ENCODE measurements at regions of chr4 and their contacts with region 1.

Region 1: DNA sequence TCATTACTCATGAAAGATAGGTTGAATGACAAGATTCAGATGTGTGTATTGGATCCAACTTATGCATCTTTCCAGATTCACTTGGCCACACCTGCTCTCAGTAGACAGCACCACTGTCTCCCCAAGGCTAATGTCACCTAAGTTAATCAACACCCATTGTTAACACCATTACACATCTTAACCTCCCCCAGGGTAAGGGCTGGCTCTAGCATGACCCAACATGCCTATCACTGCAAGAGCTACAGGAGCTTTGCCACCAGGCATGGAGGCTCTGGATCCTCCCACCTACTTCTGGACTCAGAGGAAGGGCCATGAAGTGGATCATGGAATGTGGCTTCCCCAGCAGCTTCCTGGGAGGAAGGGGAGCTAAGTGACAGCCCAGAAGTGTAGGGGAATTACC is 32.7 kb upstream of the LSM6 start:
- DNase-seq: no peak
- H3K4me3 ChIP-seq: no peak overlapping the region
- H3K4me3 Mint-ChIP-seq: no peak overlapping the region
- H3K27ac ChIP-seq: no peak overlapping the region
- H3K27ac Mint-ChIP-seq: no peak overlapping the region
- H3K4me1 ChIP-seq: peaks cover 11 to 12% of the 10 kb centered on the region in 2 donors
- H3K4me1 Mint-ChIP-seq: peaks cover 13% of the 10 kb centered on the region
- H3K27me3 ChIP-seq: peaks cover 0 to 9% of the 10 kb centered on the region in 2 donors
- H3K27me3 Mint-ChIP-seq: peaks cover 8 to 13% (median 9%) of the 10 kb centered on the region in 3 donors
- CTCF ChIP-seq: no peak

Region 2: GRCh38 chr4:146095091-146095690 is 47.6 kb before region 1 on chr4:
- intact Hi-C with region 1: loop called in 1 of 2 experiments (anchors 10 kb)
- DNase-seq: peak; percentile 42 to 75 (median 64)
- H3K4me3 ChIP-seq: no peak overlapping the region
- H3K4me3 Mint-ChIP-seq: no peak overlapping the region
- H3K27ac ChIP-seq: no peak overlapping the region
- H3K27ac Mint-ChIP-seq: no peak overlapping the region
- H3K4me1 ChIP-seq: no peaks in the 10 kb centered on the region
- H3K4me1 Mint-ChIP-seq: peaks cover 12% of the 10 kb centered on the region
- H3K27me3 ChIP-seq: peaks cover 0 to 5% of the 10 kb centered on the region in 2 donors
- H3K27me3 Mint-ChIP-seq: peaks cover 3 to 10% (median 9%) of the 10 kb centered on the region in 3 donors
- CTCF ChIP-seq: peak; percentile 96

Region 3: GRCh38 chr4:146105464-146105863 is 37.3 kb before region 1 on chr4:
- intact Hi-C with region 1: loop called in 1 of 2 experiments (anchors 5 kb)
- DNase-seq: peak; percentile 84 to 90 (median 84)
- H3K4me3 ChIP-seq: peak overlapping the region in 1 of 3 experiments; percentile 51
- H3K4me3 Mint-ChIP-seq: peak overlapping the region; percentile 20 to 67
- H3K27ac ChIP-seq: peak overlapping the region; percentile 91 to 94
- H3K27ac Mint-ChIP-seq: peak overlapping the region; percentile 96 to 99 (median 97)
- H3K4me1 ChIP-seq: peaks cover 69 to 73% of the 10 kb centered on the region in 2 donors
- H3K4me1 Mint-ChIP-seq: peaks cover 63% of the 10 kb centered on the region
- H3K27me3 ChIP-seq: no peaks in the 10 kb centered on the region
- H3K27me3 Mint-ChIP-seq: peaks cover 0 to 2% (median 0%) of the 10 kb centered on the region in 3 donors
- CTCF ChIP-seq: no peak

Region 4: DNA sequence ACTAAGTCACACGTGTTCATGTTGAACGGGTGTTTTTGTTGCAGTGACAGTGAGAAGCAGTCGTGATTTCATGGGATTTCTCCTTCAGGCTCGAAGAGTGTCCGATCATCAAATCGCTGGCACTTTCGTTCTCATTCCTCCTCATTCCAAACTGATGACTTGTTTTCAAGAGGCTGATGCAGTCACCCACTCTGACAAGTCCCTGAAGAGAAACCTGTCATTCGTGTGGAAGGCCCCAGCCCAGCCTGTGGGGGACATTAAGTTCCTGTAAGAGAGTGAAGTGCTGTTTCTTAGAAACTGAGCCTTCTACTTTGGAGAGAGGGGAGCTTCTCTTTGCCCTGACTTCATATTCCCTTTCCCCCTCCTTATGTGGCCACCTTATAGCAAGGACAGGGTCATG is 79.5 kb after region 1 on chr4:
- intact Hi-C with region 1: no loop called
- DNase-seq: no peak
- H3K4me3 ChIP-seq: no peak overlapping the region
- H3K4me3 Mint-ChIP-seq: no peak overlapping the region
- H3K27ac ChIP-seq: no peak overlapping the region
- H3K27ac Mint-ChIP-seq: no peak overlapping the region
- H3K4me1 ChIP-seq: no peaks in the 10 kb centered on the region
- H3K4me1 Mint-ChIP-seq: no peaks in the 10 kb centered on the region
- H3K27me3 ChIP-seq: no peaks in the 10 kb centered on the region
- H3K27me3 Mint-ChIP-seq: peaks cover 3 to 13% (median 7%) of the 10 kb centered on the region in 3 donors
- CTCF ChIP-seq: no peak

Region 5: DNA sequence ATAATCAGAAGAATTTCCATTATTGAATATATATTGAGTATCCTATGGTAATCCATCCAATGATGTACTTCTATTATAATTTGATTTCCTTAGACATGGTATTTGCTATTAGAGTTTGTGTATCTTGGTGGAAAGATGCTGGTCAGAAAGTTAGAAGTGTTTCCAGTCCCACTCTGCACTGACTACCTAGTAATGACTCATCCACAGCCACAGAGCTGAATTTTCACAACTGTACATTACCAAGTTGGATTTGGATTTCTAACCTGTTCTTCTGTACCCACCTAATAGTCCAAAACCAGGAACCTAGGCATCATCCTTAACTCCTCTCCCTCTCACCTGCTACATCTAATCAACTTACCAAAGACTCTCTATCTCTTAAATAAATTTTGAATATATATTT is 217.0 kb after region 1 on chr4:
- intact Hi-C with region 1: no loop called
- DNase-seq: no peak
- H3K4me3 ChIP-seq: no peak overlapping the region
- H3K4me3 Mint-ChIP-seq: no peak overlapping the region
- H3K27ac ChIP-seq: no peak overlapping the region
- H3K27ac Mint-ChIP-seq: no peak overlapping the region
- H3K4me1 ChIP-seq: no peaks in the 10 kb centered on the region
- H3K4me1 Mint-ChIP-seq: no peaks in the 10 kb centered on the region
- H3K27me3 ChIP-seq: no peaks in the 10 kb centered on the region
- H3K27me3 Mint-ChIP-seq: no peaks in the 10 kb centered on the region
- CTCF ChIP-seq: no peak

Measured in CD14-positive monocyte (primary cell).